Sigmoid colon (tissue), 7 donors: ENCODE measurements at regions of chr12 and their contacts with region 1.

Region 1: GRCh38 chr12:7108796-7109571 is at the start of gene C1RL:
- DNase-seq: peak; percentile 97
- H3K4me3 ChIP-seq: peak within 1 kb of the TSS; percentile 44 to 63 (median 57)
- H3K27ac ChIP-seq: peak within 1 kb of the TSS; percentile 87 to 94 (median 92)
- H3K4me1 ChIP-seq: peaks cover 0 to 26% (median 18%) of the 10 kb centered on the region in 4 donors
- H3K27me3 ChIP-seq: no peaks in the 10 kb centered on the region
- CTCF ChIP-seq: peak; percentile 97 to 99 (median 98)
- EP300 ChIP-seq: peak in 3 of 4 donors; percentile 51 to 80 (median 61)
- POLR2A ChIP-seq: no peak
- total RNA-seq, gene C1RL: 44.2 to 82.6 (median 65.3) TPM

Region 2: GRCh38 chr12:6867413-6868210 is 241.4 kb before region 1 on chr12 and contains the start of gene TPI1:
- intact Hi-C with region 1: loop called (anchors 10 kb)
- DNase-seq: peak; percentile 96
- H3K4me3 ChIP-seq: peak within 1 kb of the TSS; percentile 72 to 100 (median 96)
- H3K27ac ChIP-seq: peak within 1 kb of the TSS; percentile 95 to 100 (median 98)
- H3K4me1 ChIP-seq: peaks cover 0 to 48% (median 42%) of the 10 kb centered on the region in 4 donors
- H3K27me3 ChIP-seq: no peaks in the 10 kb centered on the region
- CTCF ChIP-seq: no peak
- EP300 ChIP-seq: no peak
- POLR2A ChIP-seq: peak; percentile 96 to 98
- total RNA-seq, gene TPI1: 194 to 345 (median 299) TPM

Region 3: DNA sequence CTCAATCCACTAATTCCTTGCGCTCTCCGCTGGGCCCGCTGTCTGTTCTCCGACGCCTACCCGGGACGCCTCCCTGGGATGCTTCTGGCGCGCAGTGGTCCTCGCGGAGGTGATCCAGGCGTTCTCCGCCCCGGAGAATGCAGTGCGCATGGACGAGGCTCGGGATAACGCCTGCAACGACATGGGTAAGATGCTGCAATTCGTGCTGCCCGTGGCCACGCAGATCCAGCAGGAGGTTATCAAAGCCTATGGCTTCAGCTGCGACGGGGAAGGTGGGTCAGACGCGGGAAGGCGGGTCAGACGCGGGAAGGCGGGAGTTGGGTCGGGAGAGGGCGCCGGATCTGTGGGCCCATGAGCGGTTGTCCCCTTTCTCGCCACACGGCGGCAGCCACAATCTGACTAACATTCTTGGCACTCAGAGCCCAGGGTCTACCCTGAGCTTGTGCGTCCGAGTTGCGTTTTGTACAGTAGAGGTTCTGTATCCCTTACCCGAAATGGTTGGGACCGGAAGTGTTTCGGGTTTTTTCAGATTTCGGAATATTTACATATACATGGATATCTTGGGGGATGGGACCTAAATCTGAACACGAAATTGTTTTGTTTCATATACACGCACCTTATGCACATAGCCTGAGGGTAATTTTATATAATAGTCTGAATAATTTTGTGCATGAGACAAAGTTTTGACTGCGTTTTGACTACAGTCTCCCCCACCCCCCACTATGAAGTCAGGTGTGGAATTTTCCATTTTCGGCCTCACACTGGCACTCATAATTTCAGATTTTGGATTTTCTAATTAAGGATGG is 164.4 kb before region 1 on chr12:
- intact Hi-C with region 1: loop called (anchors 2 kb)
- DNase-seq: peak; percentile 98
- H3K4me3 ChIP-seq: peak overlapping the region; percentile 52 to 76 (median 70)
- H3K27ac ChIP-seq: peak overlapping the region; percentile 92 to 99 (median 96)
- H3K4me1 ChIP-seq: peaks cover 0 to 55% (median 43%) of the 10 kb centered on the region in 4 donors
- H3K27me3 ChIP-seq: no peaks in the 10 kb centered on the region
- CTCF ChIP-seq: peak; percentile 77 to 97 (median 89)
- EP300 ChIP-seq: no peak
- POLR2A ChIP-seq: no peak

Region 4: GRCh38 chr12:6965026-6965661 is 143.8 kb before region 1 on chr12:
- intact Hi-C with region 1: loop called (anchors 2 kb)
- DNase-seq: peak; percentile 96
- H3K4me3 ChIP-seq: no peak overlapping the region
- H3K27ac ChIP-seq: peak overlapping the region; percentile 81 to 86 (median 82)
- H3K4me1 ChIP-seq: peaks cover 0 to 57% (median 46%) of the 10 kb centered on the region in 4 donors
- H3K27me3 ChIP-seq: no peaks in the 10 kb centered on the region
- CTCF ChIP-seq: peak; percentile 81 to 97 (median 88)
- EP300 ChIP-seq: no peak
- POLR2A ChIP-seq: no peak

Region 5: DNA sequence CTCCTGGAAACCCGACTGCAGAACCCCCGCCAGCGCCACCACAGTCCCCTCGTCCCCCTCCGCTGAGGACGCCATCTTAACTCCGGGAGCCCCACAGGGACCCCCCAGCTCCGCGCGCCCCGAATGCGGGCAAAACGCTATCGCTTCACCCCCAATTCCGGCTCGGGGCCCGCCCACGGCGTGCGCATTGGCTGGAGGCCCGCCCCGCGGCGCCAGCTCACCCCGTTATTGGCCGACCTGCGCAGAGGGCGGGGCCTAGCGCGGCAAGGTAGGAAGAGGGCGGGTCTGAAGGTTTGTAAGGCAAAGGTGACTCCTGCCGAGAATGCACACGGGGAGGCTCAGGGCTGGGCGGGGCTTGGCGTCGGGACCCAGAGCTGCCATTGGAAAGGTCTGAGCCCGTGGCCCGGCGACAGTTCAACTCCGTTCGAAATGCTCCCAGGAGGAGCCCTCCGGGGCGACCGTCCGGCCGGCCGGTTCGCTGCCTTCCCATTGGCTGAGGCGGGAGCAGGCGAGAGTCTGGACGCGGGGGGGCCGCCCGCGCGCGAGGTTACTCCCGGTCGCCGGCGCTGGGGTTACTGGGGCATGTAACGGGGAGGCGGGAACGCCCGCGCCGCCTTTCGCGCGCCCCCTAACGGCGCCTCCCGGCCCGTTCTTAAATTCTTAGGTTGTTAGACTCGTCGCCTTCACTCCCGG is 90.5 kb before region 1 on chr12 and contains the start of gene LPCAT3:
- intact Hi-C with region 1: loop called (anchors 2 kb)
- DNase-seq: peak; percentile 99
- H3K4me3 ChIP-seq: peak within 1 kb of the TSS; percentile 63 to 93 (median 74)
- H3K27ac ChIP-seq: peak within 1 kb of the TSS; percentile 80 to 95 (median 94)
- H3K4me1 ChIP-seq: peaks cover 0 to 24% (median 23%) of the 10 kb centered on the region in 4 donors
- H3K27me3 ChIP-seq: no peaks in the 10 kb centered on the region
- CTCF ChIP-seq: peak; percentile 68 to 84 (median 74)
- EP300 ChIP-seq: peak in 1 of 4 donors; percentile 49
- POLR2A ChIP-seq: peak; percentile 67 to 83
- total RNA-seq, gene LPCAT3: 18.6 to 27.0 (median 25.4) TPM

Region 6: DNA sequence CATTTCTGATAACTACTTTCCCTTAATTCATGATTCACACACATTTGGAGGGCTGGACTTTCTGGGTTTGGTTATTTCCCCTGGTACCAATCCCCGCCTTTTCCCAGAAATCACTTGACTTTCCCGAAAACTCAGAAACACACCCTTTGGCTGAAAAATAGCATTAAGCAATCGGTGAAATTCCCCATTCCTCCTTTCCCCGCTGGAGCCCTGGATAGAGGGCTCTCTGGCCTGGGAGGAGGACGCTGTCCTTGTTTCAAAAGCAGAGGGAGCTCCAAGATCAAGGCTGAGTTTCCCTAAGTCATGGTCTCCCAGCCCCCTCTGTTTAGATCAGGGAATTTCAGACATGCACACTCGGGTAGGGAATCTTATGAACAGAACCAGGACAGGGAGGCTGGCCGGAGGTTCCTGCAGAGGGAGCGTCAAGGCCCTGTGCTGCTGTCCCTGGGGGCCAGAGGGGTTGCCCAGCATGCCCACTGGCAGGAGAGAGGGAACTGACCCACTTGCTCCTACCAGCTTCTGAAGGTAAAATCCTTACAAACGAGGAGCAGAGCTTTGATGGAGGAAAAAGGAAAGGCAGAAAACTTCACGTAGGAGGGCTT is 48.5 kb before region 1 on chr12 and contains the start of gene C1S:
- intact Hi-C with region 1: loop called (anchors 1 kb)
- DNase-seq: peak; percentile 95
- H3K4me3 ChIP-seq: peak within 1 kb of the TSS; percentile 38 to 55 (median 50)
- H3K27ac ChIP-seq: peak within 1 kb of the TSS; percentile 81 to 87 (median 84)
- H3K4me1 ChIP-seq: peaks cover 0 to 30% (median 24%) of the 10 kb centered on the region in 4 donors
- H3K27me3 ChIP-seq: no peaks in the 10 kb centered on the region
- CTCF ChIP-seq: peak; percentile 82 to 99 (median 89)
- EP300 ChIP-seq: peak in 3 of 4 donors; percentile 21 to 72 (median 54)
- POLR2A ChIP-seq: peak; percentile 51 to 79
- total RNA-seq, gene C1S: 420 to 622 (median 463) TPM

Region 7: DNA sequence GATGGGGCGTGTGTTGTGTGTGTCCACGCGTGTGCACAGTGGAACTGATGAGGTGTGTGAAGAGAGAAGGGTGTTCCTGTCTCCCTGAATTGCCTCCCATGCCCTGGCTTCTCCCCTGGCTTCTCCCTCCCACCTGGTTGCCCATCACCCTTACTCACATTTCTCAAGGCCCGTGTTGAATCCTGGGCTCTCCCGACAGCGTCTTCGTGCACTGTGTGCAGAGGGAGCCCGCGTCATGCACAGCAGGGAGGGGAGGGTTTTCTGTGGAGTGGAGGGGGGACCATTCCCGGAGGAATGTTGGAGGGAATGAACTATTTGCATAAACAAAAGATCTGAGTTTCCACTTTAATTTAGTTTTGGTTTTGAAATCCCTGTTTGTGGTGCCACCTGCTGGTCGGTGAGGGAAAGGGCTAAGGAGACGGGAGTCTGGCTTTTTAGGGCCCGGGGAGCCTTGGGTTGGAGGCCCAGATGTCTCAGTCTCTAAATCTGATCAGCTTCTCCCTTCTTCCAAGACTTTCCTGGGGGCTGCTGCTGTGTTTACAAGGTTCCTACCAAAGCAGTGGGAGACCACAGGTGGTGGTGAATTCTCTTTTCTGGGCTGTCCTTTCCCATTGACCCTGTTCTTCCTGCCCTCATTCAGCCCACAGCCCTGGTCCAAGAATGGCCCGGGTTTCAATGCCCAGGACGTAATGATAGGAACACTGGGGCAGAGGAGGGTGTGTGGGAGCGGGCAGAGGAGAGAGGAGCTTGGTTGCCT is 16.6 kb before region 1 on chr12 and contains the start of gene C1R:
- intact Hi-C with region 1: loop called (anchors 2 kb)
- DNase-seq: peak; percentile 95
- H3K4me3 ChIP-seq: peak within 1 kb of the TSS; percentile 47 to 57 (median 54)
- H3K27ac ChIP-seq: peak within 1 kb of the TSS; percentile 77 to 85 (median 80)
- H3K4me1 ChIP-seq: peaks cover 0 to 35% (median 33%) of the 10 kb centered on the region in 4 donors
- H3K27me3 ChIP-seq: no peaks in the 10 kb centered on the region
- CTCF ChIP-seq: peak; percentile 86 to 91 (median 91)
- EP300 ChIP-seq: peak in 1 of 4 donors; percentile 13
- POLR2A ChIP-seq: no peak
- total RNA-seq, gene C1R: 328 to 493 (median 467) TPM

Region 8: DNA sequence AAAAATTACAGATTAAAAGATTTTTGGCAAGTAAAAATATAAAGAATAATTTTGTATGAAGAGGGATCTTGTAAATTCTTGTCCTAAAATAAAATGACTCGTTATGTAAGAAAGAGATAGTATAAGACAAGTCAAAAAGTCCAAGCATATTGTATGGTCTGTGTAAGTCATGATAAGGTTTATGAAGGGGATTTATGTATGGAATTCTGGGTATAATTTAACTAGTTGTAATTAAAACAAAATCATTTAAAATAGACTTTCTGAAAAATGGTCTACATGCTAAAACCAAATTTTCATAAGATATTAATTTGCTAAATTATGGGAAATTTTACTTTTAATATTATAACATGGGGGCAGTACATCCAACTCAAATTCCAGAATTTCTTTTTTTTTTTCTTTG is 62.9 kb after region 1 on chr12:
- intact Hi-C with region 1: no loop called
- DNase-seq: no peak
- H3K4me3 ChIP-seq: no peak overlapping the region
- H3K27ac ChIP-seq: no peak overlapping the region
- H3K4me1 ChIP-seq: no peaks in the 10 kb centered on the region
- H3K27me3 ChIP-seq: no peaks in the 10 kb centered on the region
- CTCF ChIP-seq: no peak
- EP300 ChIP-seq: no peak
- POLR2A ChIP-seq: no peak

Region 9: DNA sequence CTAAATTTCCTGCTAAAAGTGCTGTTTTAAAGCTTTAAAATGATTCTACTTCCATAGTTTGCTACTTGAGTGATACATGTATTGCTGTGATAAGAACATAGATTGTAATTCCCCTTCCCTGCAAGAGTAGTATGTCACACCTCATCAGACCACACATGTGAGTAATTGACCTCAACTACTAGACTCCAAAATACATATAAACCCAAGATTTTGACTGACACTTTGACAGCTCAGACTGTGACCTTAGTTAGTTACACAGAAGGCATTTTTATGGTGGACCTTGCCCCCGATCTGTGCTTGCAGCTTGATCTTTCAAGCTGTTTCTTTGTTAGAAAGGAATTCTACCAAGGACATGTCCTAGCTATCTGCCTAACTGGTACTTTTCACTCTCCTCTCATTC is 538.1 kb after region 1 on chr12:
- intact Hi-C with region 1: no loop called
- DNase-seq: no peak
- H3K4me3 ChIP-seq: no peak overlapping the region
- H3K27ac ChIP-seq: no peak overlapping the region
- H3K4me1 ChIP-seq: no peaks in the 10 kb centered on the region
- H3K27me3 ChIP-seq: no peaks in the 10 kb centered on the region
- CTCF ChIP-seq: no peak
- EP300 ChIP-seq: no peak
- POLR2A ChIP-seq: no peak